ENCODE measurements at regions of chr12 and their contacts with region 1.

Region 1: GRCh38 chr12:12736759-12737676 is 19.9 kb downstream of the CDKN1B start:
- DNase-seq: peak; percentile 61 to 70 (median 64)
- H3K4me3 ChIP-seq: peak overlapping the region in 1 of 2 donors; percentile 46
- H3K4me3 Mint-ChIP-seq: peak overlapping the region; percentile 67 to 88 (median 76)
- H3K27ac ChIP-seq: peak overlapping the region; percentile 76
- H3K27ac Mint-ChIP-seq: peak overlapping the region; percentile 88 to 93 (median 93)
- H3K4me1 ChIP-seq: peaks cover 55% of the 10 kb centered on the region
- H3K4me1 Mint-ChIP-seq: peaks cover 24 to 59% (median 41%) of the 10 kb centered on the region in 4 donors
- H3K27me3 ChIP-seq: no peaks in the 10 kb centered on the region
- H3K27me3 Mint-ChIP-seq: no peaks in the 10 kb centered on the region

Region 2: GRCh38 chr12:11621797-11622423 is 1115.1 kb before region 1 on chr12:
- CTCF ChIA-PET with region 1: no interaction called
- POLR2A ChIA-PET with region 1: no interaction called
- intact Hi-C with region 1: no loop called
- DNase-seq: peak; percentile 21 to 43 (median 34)
- H3K4me3 ChIP-seq: no peak overlapping the region
- H3K4me3 Mint-ChIP-seq: no peak overlapping the region
- H3K27ac ChIP-seq: no peak overlapping the region
- H3K27ac Mint-ChIP-seq: peak overlapping the region in 2 of 7 donors; percentile 39 to 91
- H3K4me1 ChIP-seq: no peaks in the 10 kb centered on the region
- H3K4me1 Mint-ChIP-seq: peaks cover 0 to 6% (median 3%) of the 10 kb centered on the region in 4 donors
- H3K27me3 ChIP-seq: no peaks in the 10 kb centered on the region
- H3K27me3 Mint-ChIP-seq: no peaks in the 10 kb centered on the region

Region 3: GRCh38 chr12:12467688-12468261 is 269.2 kb before region 1 on chr12:
- CTCF ChIA-PET with region 1: interaction called, 16 read pairs
- POLR2A ChIA-PET with region 1: interaction called, 13 read pairs
- intact Hi-C with region 1: no loop called
- DNase-seq: peak; percentile 76 to 88 (median 85)
- H3K4me3 ChIP-seq: peak overlapping the region in 1 of 2 donors; percentile 12
- H3K4me3 Mint-ChIP-seq: peak overlapping the region; percentile 52 to 83 (median 62)
- H3K27ac ChIP-seq: peak overlapping the region; percentile 82
- H3K27ac Mint-ChIP-seq: peak overlapping the region; percentile 98 to 100 (median 99)
- H3K4me1 ChIP-seq: peaks cover 78% of the 10 kb centered on the region
- H3K4me1 Mint-ChIP-seq: peaks cover 55 to 90% (median 76%) of the 10 kb centered on the region in 4 donors
- H3K27me3 ChIP-seq: no peaks in the 10 kb centered on the region
- H3K27me3 Mint-ChIP-seq: no peaks in the 10 kb centered on the region

Region 4: GRCh38 chr12:12568045-12568444 is 169.0 kb before region 1 on chr12:
- CTCF ChIA-PET with region 1: interaction called, 28 read pairs
- POLR2A ChIA-PET with region 1: interaction called, 26 read pairs
- intact Hi-C with region 1: no loop called
- DNase-seq: no peak
- H3K4me3 ChIP-seq: no peak overlapping the region
- H3K4me3 Mint-ChIP-seq: no peak overlapping the region
- H3K27ac ChIP-seq: no peak overlapping the region
- H3K27ac Mint-ChIP-seq: peak overlapping the region in 1 of 7 donors; percentile 71
- H3K4me1 ChIP-seq: peaks cover 12% of the 10 kb centered on the region
- H3K4me1 Mint-ChIP-seq: peaks cover 6 to 18% (median 14%) of the 10 kb centered on the region in 4 donors
- H3K27me3 ChIP-seq: no peaks in the 10 kb centered on the region
- H3K27me3 Mint-ChIP-seq: no peaks in the 10 kb centered on the region

Region 5: DNA sequence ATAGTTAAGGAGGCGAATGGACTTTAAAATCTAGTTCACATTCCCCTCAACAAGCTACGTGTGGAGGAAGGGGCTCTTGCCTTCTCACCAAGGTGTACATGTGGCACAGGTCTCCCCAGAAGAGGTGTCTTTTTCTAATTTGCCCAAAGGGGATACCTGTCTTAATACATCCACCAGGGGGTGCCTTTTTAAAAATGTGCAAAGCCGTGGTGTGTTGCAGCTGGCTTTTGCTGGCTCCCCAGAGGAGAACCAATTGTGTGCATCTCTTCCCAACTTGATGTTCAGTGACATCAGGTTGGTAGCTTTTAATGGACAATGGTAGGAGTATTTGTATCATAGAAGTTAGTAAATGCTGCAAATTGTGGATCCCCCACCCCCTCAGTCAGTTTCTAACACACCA is 91.5 kb before region 1 on chr12:
- CTCF ChIA-PET with region 1: interaction called, 44 read pairs
- POLR2A ChIA-PET with region 1: interaction called, 24 read pairs
- intact Hi-C with region 1: loop called (anchors 1 kb)
- DNase-seq: peak; percentile 52 to 70 (median 65)
- H3K4me3 ChIP-seq: no peak overlapping the region
- H3K4me3 Mint-ChIP-seq: no peak overlapping the region
- H3K27ac ChIP-seq: no peak overlapping the region
- H3K27ac Mint-ChIP-seq: peak overlapping the region in 5 of 7 donors; percentile 36 to 77 (median 55)
- H3K4me1 ChIP-seq: no peaks in the 10 kb centered on the region
- H3K4me1 Mint-ChIP-seq: peaks cover 6 to 11% (median 7%) of the 10 kb centered on the region in 4 donors
- H3K27me3 ChIP-seq: no peaks in the 10 kb centered on the region
- H3K27me3 Mint-ChIP-seq: no peaks in the 10 kb centered on the region

Region 6: GRCh38 chr12:12704593-12705230 is 32.3 kb before region 1 on chr12:
- CTCF ChIA-PET with region 1: interaction called, 28 read pairs
- POLR2A ChIA-PET with region 1: interaction called, 12 read pairs
- intact Hi-C with region 1: no loop called
- DNase-seq: peak in 4 of 5 donors; percentile 36 to 58 (median 48)
- H3K4me3 ChIP-seq: no peak overlapping the region
- H3K4me3 Mint-ChIP-seq: peak overlapping the region in 6 of 8 donors; percentile 2 to 84 (median 36)
- H3K27ac ChIP-seq: no peak overlapping the region
- H3K27ac Mint-ChIP-seq: peak overlapping the region in 5 of 7 donors; percentile 50 to 88 (median 73)
- H3K4me1 ChIP-seq: peaks cover 37% of the 10 kb centered on the region
- H3K4me1 Mint-ChIP-seq: peaks cover 14 to 32% (median 20%) of the 10 kb centered on the region in 4 donors
- H3K27me3 ChIP-seq: no peaks in the 10 kb centered on the region
- H3K27me3 Mint-ChIP-seq: no peaks in the 10 kb centered on the region

Region 7: DNA sequence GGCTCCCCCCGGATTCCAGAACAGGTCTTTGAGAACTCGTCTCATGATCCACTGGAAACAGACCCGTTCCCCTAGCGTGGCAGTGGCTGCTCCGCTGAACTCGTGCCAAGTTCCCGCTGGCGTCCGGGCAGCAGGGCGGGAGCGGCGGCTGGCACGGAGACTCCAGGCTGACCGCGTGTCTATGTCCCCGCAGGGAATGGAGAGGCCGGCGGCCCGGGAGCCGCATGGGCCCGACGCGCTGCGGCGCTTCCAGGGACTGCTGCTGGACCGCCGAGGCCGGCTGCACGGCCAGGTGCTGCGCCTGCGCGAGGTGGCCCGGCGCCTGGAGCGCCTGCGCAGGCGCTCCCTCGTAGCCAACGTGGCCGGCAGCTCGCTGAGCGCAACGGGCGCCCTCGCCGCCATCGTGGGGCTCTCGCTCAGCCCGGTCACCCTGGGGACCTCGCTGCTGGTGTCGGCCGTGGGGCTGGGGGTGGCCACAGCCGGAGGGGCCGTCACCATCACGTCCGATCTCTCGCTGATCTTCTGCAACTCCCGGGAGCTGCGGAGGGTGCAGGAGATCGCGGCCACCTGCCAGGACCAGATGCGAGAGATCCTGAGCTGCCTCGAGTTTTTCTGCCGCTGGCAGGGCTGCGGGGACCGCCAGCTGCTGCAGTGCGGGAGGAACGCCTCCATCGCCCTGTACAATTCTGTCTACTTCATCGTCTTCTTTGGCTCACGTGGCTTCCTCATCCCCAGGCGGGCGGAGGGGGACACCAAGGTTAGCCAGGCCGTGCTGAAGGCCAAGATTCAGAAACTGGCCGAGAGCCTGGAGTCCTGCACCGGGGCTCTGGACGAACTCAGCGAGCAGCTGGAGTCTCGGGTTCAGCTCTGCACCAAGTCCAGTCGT is 49.9 kb after region 1 on chr12:
- CTCF ChIA-PET with region 1: interaction called, 20 read pairs
- POLR2A ChIA-PET with region 1: interaction called, 12 read pairs
- intact Hi-C with region 1: no loop called
- DNase-seq: peak; percentile 73 to 78 (median 76)
- H3K4me3 ChIP-seq: peak overlapping the region; percentile 75 to 81
- H3K4me3 Mint-ChIP-seq: peak overlapping the region; percentile 80 to 92 (median 88)
- H3K27ac ChIP-seq: peak overlapping the region; percentile 65
- H3K27ac Mint-ChIP-seq: peak overlapping the region; percentile 48 to 90 (median 85)
- H3K4me1 ChIP-seq: peaks cover 27% of the 10 kb centered on the region
- H3K4me1 Mint-ChIP-seq: peaks cover 4 to 30% (median 10%) of the 10 kb centered on the region in 4 donors
- H3K27me3 ChIP-seq: no peaks in the 10 kb centered on the region
- H3K27me3 Mint-ChIP-seq: no peaks in the 10 kb centered on the region